ENCODE measurements at regions of chr18 and their contacts with region 1.

Region 1: GRCh38 chr18:62425465-62426195 is 97.2 kb upstream of the ZCCHC2 start:
- DNase-seq: peak; percentile 89
- H3K4me3 Mint-ChIP-seq: peak overlapping the region; percentile 57
- H3K27ac Mint-ChIP-seq: peak overlapping the region; percentile 82
- H3K4me1 Mint-ChIP-seq: peaks cover 51% of the 10 kb centered on the region
- H3K27me3 Mint-ChIP-seq: no peaks in the 10 kb centered on the region
- CTCF ChIP-seq: peak; percentile 62

Region 2: GRCh38 chr18:61785588-61785987 is 640.0 kb before region 1 on chr18:
- CTCF ChIA-PET with region 1: no interaction called
- intact Hi-C with region 1: no loop called
- DNase-seq: no peak
- H3K4me3 Mint-ChIP-seq: no peak overlapping the region
- H3K27ac Mint-ChIP-seq: no peak overlapping the region
- H3K4me1 Mint-ChIP-seq: no peaks in the 10 kb centered on the region
- H3K27me3 Mint-ChIP-seq: peaks cover 16% of the 10 kb centered on the region
- CTCF ChIP-seq: no peak

Region 3: DNA sequence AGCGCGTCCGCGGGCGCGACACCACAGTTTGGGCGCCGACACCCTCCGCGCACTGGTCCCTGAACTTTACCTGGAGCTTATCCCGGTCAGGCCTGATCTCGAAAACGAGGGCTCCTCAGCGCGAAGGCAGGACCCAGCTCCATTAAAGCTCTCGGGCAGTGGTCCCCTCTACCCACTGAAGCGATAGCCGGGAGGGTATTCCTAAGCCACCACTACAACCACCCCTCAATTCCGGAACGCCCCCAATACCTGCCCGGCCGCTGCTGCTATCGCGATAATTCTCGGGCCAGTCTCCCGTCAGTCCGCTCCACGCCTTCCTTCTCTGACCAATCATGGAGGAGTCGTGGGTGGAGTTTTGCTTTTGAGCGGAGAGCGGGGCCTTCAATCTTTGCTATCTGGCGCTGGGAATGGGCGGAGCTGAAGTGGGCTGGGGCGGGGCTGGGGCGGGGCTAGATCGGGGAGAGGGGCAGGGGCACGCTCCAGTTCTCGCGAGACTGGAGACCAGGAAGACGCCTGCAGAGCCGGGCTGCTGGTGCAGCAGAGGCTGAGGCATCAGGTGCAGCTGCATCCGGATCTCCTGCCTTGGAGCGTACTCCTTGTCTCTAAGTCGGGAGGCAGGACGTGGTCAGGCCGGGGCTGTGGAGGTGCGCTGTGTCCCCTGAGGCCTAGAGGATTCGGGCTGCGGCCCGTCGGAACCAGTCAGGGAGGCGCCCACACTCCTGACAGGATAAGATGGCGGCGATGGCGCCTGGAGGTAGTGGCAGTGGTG is 238.7 kb before region 1 on chr18 and contains the starts of genes PIGN and RELCH:
- CTCF ChIA-PET with region 1: no interaction called
- intact Hi-C with region 1: loop called (anchors 2 kb)
- DNase-seq: peak; percentile 96
- H3K4me3 Mint-ChIP-seq: peak within 1 kb of the TSS; percentile 99
- H3K27ac Mint-ChIP-seq: peak within 1 kb of the TSS; percentile 97
- H3K4me1 Mint-ChIP-seq: peaks cover 33% of the 10 kb centered on the region
- H3K27me3 Mint-ChIP-seq: no peaks in the 10 kb centered on the region
- CTCF ChIP-seq: no peak
- total RNA-seq, gene PIGN: 52.5 and 57.3 TPM in 2 replicates
- total RNA-seq, gene RELCH: 54.5 and 63.9 TPM in 2 replicates

Region 4: DNA sequence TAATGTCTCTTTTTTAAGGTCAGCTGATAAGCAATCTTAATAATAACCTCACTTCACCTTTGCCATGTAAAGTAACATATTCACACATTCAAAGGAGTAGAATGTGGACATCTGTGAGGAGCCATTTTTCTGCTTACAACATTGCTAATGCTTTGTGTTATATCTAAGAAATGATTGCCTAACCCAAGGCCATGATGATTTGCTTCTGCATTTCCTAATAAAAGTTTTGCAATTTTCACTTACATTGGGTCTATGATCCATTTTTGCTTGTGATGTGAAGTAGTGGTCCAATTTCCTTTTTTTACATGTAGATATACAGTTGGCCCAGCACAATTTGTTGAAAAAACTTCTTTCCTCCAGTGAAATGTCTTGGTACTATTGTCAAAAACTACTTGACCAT is 216.6 kb before region 1 on chr18:
- CTCF ChIA-PET with region 1: no interaction called
- intact Hi-C with region 1: no loop called
- DNase-seq: no peak
- H3K4me3 Mint-ChIP-seq: no peak overlapping the region
- H3K27ac Mint-ChIP-seq: no peak overlapping the region
- H3K4me1 Mint-ChIP-seq: peaks cover 19% of the 10 kb centered on the region
- H3K27me3 Mint-ChIP-seq: no peaks in the 10 kb centered on the region
- CTCF ChIP-seq: no peak

Region 5: GRCh38 chr18:62339106-62339988 is 86.3 kb before region 1 on chr18:
- CTCF ChIA-PET with region 1: interaction called, 6 read pairs
- intact Hi-C with region 1: loop called (anchors 2 kb)
- DNase-seq: no peak
- H3K4me3 Mint-ChIP-seq: peak overlapping the region; percentile 59
- H3K27ac Mint-ChIP-seq: peak overlapping the region; percentile 91
- H3K4me1 Mint-ChIP-seq: peaks cover 77% of the 10 kb centered on the region
- H3K27me3 Mint-ChIP-seq: no peaks in the 10 kb centered on the region
- CTCF ChIP-seq: no peak

Region 6: GRCh38 chr18:62486304-62486964 is 60.8 kb after region 1 on chr18:
- CTCF ChIA-PET with region 1: interaction called, 4 read pairs
- intact Hi-C with region 1: loop called (anchors 2 kb)
- DNase-seq: peak; percentile 73
- H3K4me3 Mint-ChIP-seq: peak overlapping the region; percentile 60
- H3K27ac Mint-ChIP-seq: peak overlapping the region; percentile 92
- H3K4me1 Mint-ChIP-seq: peaks cover 33% of the 10 kb centered on the region
- H3K27me3 Mint-ChIP-seq: no peaks in the 10 kb centered on the region
- CTCF ChIP-seq: no peak

Region 7: GRCh38 chr18:62584241-62585120 is 158.9 kb after region 1 on chr18:
- CTCF ChIA-PET with region 1: interaction called, 6 read pairs
- intact Hi-C with region 1: loop called (anchors 1 kb)
- DNase-seq: peak; percentile 90
- H3K4me3 Mint-ChIP-seq: no peak overlapping the region
- H3K27ac Mint-ChIP-seq: no peak overlapping the region
- H3K4me1 Mint-ChIP-seq: peaks cover 20% of the 10 kb centered on the region
- H3K27me3 Mint-ChIP-seq: no peaks in the 10 kb centered on the region
- CTCF ChIP-seq: peak; percentile 95